ENCODE measurements at regions of chr16 and their contacts with region 1.

Region 1: GRCh38 chr16:72664509-72665225 is 383.3 kb downstream of the ZFHX3 start:
- DNase-seq: peak; percentile 99
- ATAC-seq: peak; percentile 100
- H3K4me3 ChIP-seq: peak overlapping the region; percentile 65
- H3K27ac ChIP-seq: peak overlapping the region; percentile 26; the same call in 1 of the 2 replicates
- H3K4me1 ChIP-seq: no peaks in the 10 kb centered on the region
- H3K27me3 ChIP-seq: no peaks in the 10 kb centered on the region
- CTCF ChIP-seq: no peak
- POLR2A ChIP-seq: peak; percentile 67; the same call in 1 of the 2 replicates
- RAD21 ChIP-seq: no peak

Region 2: GRCh38 chr16:72621651-72622050 is 43.0 kb before region 1 on chr16:
- CTCF ChIA-PET with region 1: no interaction called
- POLR2A ChIA-PET with region 1: no interaction called
- dilution Hi-C with region 1: no loop called
- in situ Hi-C with region 1: no loop called
- intact Hi-C with region 1: no loop called
- DNase-seq: peak; percentile 58
- ATAC-seq: no peak; the same call in 1 of the 2 replicates
- H3K4me3 ChIP-seq: no peak overlapping the region
- H3K27ac ChIP-seq: no peak overlapping the region
- H3K4me1 ChIP-seq: no peaks in the 10 kb centered on the region
- H3K27me3 ChIP-seq: no peaks in the 10 kb centered on the region
- CTCF ChIP-seq: no peak
- POLR2A ChIP-seq: no peak
- RAD21 ChIP-seq: no peak

Region 3: GRCh38 chr16:72938795-72939164 is 274.1 kb after region 1 on chr16:
- CTCF ChIA-PET with region 1: no interaction called
- POLR2A ChIA-PET with region 1: no interaction called
- dilution Hi-C with region 1: no loop called
- in situ Hi-C with region 1: loop called (anchors 10 kb)
- intact Hi-C with region 1: loop called (anchors 10 kb)
- DNase-seq: peak; percentile 93
- ATAC-seq: peak; percentile 93
- H3K4me3 ChIP-seq: peak overlapping the region; percentile 22; the same call in 1 of the 2 replicates
- H3K27ac ChIP-seq: peak overlapping the region; percentile 78
- H3K4me1 ChIP-seq: peaks cover 16% of the 10 kb centered on the region
- H3K27me3 ChIP-seq: no peaks in the 10 kb centered on the region
- CTCF ChIP-seq: no peak
- POLR2A ChIP-seq: no peak
- RAD21 ChIP-seq: peak; percentile 24; the same call in 1 of the 2 replicates

Region 4: GRCh38 chr16:73154063-73154870 is 489.6 kb after region 1 on chr16:
- CTCF ChIA-PET with region 1: no interaction called
- POLR2A ChIA-PET with region 1: no interaction called
- dilution Hi-C with region 1: no loop called
- in situ Hi-C with region 1: no loop called
- intact Hi-C with region 1: no loop called
- DNase-seq: no peak
- ATAC-seq: no peak
- H3K4me3 ChIP-seq: no peak overlapping the region
- H3K27ac ChIP-seq: no peak overlapping the region
- H3K4me1 ChIP-seq: peaks cover 3% of the 10 kb centered on the region; the same call in 1 of the 2 replicates
- H3K27me3 ChIP-seq: no peaks in the 10 kb centered on the region
- CTCF ChIP-seq: no peak
- POLR2A ChIP-seq: no peak
- RAD21 ChIP-seq: no peak

Measured in IMR-90 (cell line).